ENCODE measurements at regions of chr12 and their contacts with region 1.

Region 1: DNA sequence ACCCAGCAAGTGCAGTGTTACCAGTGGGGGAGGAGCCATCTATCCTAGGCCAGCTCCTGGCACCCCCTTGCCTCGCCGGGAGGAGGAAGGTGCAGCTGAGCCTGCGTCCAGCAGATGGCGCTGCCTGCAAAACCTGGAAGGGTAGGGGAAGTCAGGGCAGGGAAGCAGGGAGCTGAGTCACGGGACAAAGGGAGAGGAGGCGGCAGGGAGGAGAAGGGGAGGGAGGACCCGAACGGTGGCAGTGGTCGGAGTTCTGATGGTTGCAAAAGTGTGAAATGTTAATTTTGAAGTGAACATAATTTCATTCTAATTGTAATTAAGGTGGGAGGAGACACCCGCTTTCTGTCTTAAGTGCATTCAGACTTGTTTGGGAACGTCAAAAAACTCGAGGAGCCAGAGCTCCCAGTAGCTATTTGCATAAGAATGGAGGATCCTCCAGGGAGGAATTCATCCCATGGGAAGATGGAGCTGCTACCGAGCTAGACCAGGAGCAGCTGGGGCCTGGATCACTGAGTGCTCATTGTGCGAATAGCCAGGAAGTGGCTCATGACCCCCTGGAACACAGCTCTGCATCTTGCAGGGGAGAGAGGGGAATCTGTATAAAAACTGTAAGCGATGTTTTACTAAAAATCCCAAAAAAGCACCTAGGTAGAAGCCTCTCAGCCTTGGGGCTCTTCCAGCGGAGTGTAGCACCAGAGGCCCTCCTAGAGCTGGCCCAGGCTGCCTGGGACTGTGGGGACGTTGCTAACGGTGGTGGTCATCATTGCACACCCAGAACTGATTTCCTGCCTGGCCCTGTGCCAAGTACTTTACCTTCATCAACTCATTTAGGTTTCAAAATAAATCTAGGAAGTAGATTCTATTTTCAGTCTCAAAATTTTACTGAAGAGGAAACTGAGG is 59.5 kb downstream of the EMP1 start:
- DNase-seq: peak; percentile 86
- H3K4me3 ChIP-seq: peak overlapping the region; percentile 51
- H3K27ac ChIP-seq: no peak overlapping the region
- H3K27me3 ChIP-seq: no peaks in the 10 kb centered on the region
- CTCF ChIP-seq: peak; percentile 99

Region 2: GRCh38 chr12:12859690-12860089 is 396.4 kb before region 1 on chr12:
- CTCF ChIA-PET with region 1: no interaction called
- POLR2A ChIA-PET with region 1: no interaction called
- DNase-seq: no peak
- H3K4me3 ChIP-seq: no peak overlapping the region
- H3K27ac ChIP-seq: no peak overlapping the region
- H3K27me3 ChIP-seq: no peaks in the 10 kb centered on the region
- CTCF ChIP-seq: no peak

Region 3: GRCh38 chr12:12916135-12916944 is 339.7 kb before region 1 on chr12:
- CTCF ChIA-PET with region 1: interaction called, 10 read pairs
- POLR2A ChIA-PET with region 1: no interaction called
- DNase-seq: no peak
- H3K4me3 ChIP-seq: no peak overlapping the region
- H3K27ac ChIP-seq: peak overlapping the region; percentile 21
- H3K27me3 ChIP-seq: no peaks in the 10 kb centered on the region
- CTCF ChIP-seq: peak; percentile 99

Region 4: DNA sequence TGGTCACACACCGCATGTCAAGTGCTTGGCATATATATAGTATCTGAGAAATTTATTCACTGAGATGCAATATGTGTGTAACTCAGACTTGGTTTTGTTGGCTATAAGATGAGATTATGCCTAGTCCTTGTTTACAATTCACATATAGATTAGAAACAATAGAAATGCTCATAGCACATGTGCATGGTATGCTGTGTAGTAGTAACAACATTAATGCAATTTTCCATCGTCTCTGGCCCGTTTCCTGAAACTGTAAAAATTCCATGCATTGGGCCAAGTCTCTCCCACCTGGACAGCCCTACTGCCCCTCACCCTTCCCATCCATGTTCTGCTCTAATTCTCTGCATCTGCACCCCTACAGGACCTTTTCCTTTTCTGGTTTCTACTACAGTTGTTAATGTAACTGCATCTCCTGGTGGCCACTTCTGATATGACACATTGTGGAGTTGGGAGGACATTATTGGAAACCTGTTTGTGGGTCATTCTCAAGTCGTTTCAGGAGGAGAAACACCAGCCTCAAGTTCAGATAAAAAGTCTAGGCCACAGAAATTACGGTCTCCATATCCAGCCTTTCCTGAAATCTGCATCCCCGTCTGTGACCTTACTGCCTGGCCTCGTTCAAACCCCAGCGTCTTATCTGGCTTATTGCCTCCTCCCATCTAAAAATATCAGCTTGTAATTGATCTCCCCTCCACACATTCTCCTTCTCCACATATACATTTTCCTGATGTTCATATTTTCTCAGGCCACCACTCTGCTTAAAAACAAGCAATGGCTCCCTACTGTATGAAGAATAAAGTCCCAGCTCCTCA is 22.0 kb before region 1 on chr12:
- CTCF ChIA-PET with region 1: interaction called, 32 read pairs
- POLR2A ChIA-PET with region 1: no interaction called
- DNase-seq: no peak
- H3K4me3 ChIP-seq: no peak overlapping the region
- H3K27ac ChIP-seq: no peak overlapping the region
- H3K27me3 ChIP-seq: no peaks in the 10 kb centered on the region
- CTCF ChIP-seq: peak; percentile 94

Region 5: DNA sequence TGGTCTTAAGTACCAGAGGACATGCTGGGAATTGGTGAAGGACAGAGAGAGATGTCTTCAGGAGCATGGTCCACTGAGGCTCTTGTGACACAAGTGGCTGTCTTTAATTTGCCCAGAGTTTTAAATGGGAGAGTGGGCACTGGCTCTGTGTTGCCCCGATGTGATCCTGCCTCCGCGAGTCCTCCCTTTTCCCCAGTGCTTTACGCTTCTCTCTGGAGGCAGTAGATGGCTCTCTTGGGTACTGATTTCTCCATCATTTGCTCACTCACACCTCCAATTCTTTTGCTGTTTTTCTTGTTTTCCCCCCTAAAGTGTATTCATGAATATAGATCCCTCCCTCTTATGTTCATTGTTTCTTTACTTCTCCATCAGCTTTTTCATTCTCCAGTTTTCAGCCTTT is 14.8 kb after region 1 on chr12:
- CTCF ChIA-PET with region 1: interaction called, 43 read pairs
- POLR2A ChIA-PET with region 1: no interaction called
- DNase-seq: no peak
- H3K4me3 ChIP-seq: no peak overlapping the region
- H3K27ac ChIP-seq: no peak overlapping the region
- H3K27me3 ChIP-seq: peaks cover 31% of the 10 kb centered on the region
- CTCF ChIP-seq: no peak

Region 6: DNA sequence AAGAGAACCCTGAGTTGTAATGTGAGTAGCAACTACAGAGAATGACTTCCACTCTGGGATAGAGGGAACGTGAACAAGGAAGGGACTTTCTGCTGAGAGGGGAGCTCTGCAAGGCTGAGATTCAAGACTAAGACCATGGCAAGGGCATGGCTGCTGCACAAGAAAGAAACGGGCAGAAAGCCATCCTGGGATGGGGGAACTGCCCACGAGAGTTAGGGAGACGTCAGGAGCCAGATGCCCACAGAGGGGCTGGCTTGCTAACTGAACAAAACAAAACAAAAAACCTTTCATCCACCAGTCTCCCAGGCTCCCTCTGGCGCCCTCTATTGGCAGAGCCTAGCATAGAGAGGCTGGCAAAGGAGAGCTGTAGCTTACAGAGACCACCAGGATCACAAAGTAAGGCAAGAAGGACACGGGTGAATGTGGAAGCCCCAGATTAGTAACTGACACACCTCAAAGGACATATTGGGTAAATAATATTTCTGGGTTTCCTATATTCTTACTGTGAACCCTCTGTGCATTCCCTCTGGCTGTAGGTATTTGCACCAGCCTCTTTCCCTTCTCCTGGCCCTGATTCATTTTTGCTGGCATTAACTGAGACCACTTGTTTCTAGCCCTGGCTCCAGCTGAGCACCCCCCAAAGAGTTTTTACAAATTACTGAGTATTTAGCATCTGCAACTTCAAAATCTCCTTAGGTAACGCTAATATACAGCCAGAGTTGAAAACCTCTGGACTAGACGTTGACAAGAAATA is 278.8 kb after region 1 on chr12:
- CTCF ChIA-PET with region 1: interaction called, 56 read pairs
- POLR2A ChIA-PET with region 1: no interaction called
- DNase-seq: peak; percentile 10
- H3K4me3 ChIP-seq: peak overlapping the region; percentile 41
- H3K27ac ChIP-seq: no peak overlapping the region
- H3K27me3 ChIP-seq: no peaks in the 10 kb centered on the region
- CTCF ChIP-seq: peak; percentile 98

Region 7: DNA sequence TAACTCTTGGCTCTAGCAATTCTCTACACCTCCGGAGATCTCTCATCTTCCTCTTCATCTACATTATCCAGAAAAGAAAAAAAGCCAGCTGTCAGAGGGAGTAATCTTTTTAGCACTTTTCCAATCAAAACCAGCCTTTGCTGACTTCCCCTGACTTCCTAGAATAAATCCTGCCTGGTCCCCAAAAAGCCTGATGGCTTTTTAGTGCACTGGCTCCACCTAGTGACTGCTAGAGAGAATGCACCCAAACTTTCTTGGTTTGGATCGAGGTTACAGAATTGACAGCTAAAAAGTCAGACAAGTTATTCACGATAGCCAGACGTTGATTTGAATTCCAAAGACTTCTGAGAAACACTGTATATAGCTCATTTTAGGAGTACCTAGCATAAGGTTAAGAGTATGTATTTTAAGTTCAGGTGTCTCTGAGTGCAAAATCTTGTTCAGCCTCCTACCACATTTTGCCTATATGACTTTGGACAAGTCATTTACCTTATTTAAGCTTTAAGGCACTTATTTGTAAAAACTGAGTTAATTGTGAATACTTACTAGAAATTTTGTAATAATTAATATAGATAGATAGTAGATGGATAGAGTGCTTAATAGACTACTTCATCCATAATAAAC is 911.1 kb after region 1 on chr12:
- CTCF ChIA-PET with region 1: interaction called, 18 read pairs
- POLR2A ChIA-PET with region 1: no interaction called
- DNase-seq: peak; percentile 24
- H3K4me3 ChIP-seq: no peak overlapping the region
- H3K27ac ChIP-seq: no peak overlapping the region
- H3K27me3 ChIP-seq: no peaks in the 10 kb centered on the region
- CTCF ChIP-seq: peak; percentile 98